PC-9 (cell line): ENCODE measurements at regions of chr12 and their contacts with region 1.

Region 1: GRCh38 chr12:100200463-100201181 is at the start of gene ACTR6:
- DNase-seq: peak; percentile 90 to 93
- H3K4me3 ChIP-seq: peak within 1 kb of the TSS; percentile 92
- H3K27ac ChIP-seq: peak within 1 kb of the TSS; percentile 37
- H3K4me1 ChIP-seq: peaks cover 26% of the 10 kb centered on the region
- H3K27me3 ChIP-seq: no peaks in the 10 kb centered on the region
- CTCF ChIP-seq: no peak
- total RNA-seq, gene ACTR6: 22.4 and 26.9 TPM in 2 replicates

Region 2: DNA sequence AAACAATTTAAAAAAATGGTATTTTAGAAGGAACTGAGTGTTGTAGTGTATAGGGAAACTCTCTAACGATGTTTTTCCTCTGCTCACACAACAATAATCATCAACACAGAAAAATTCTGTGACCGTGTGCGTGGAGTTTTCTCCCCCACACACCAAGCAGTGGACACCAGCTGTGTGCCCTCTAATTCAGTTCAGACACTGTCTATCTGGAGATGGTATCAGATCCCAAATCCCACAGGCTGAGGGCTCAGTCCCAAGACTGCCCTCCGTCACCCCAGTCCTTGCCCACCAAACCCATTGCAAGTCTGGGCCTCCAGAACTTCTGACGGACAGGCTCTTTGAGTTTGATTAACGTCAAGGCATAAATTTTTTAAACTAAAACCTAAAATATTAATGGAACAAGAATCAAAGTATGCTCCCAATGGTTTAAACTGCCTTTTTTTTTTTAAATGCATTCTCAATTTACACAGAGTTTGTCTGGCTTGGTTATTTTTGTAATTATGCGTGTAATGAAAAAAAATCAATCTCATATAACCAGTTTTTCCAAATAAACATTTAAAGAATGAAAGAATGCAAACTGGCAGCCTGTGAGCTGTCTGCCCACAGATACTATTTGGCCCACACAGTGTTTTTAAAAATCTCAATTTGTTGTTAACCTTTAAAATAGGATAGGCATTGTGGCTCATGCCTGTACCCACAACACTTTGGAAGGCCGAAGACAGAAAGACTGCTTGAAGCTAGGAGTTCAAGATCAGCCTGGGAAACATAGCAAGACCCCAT is 77.1 kb before region 1 on chr12:
- CTCF ChIA-PET with region 1: no interaction called
- POLR2A ChIA-PET with region 1: no interaction called
- intact Hi-C with region 1: no loop called
- DNase-seq: no peak
- H3K4me3 ChIP-seq: no peak overlapping the region
- H3K27ac ChIP-seq: no peak overlapping the region
- H3K4me1 ChIP-seq: peaks cover 13% of the 10 kb centered on the region
- H3K27me3 ChIP-seq: no peaks in the 10 kb centered on the region
- CTCF ChIP-seq: no peak

Region 3: DNA sequence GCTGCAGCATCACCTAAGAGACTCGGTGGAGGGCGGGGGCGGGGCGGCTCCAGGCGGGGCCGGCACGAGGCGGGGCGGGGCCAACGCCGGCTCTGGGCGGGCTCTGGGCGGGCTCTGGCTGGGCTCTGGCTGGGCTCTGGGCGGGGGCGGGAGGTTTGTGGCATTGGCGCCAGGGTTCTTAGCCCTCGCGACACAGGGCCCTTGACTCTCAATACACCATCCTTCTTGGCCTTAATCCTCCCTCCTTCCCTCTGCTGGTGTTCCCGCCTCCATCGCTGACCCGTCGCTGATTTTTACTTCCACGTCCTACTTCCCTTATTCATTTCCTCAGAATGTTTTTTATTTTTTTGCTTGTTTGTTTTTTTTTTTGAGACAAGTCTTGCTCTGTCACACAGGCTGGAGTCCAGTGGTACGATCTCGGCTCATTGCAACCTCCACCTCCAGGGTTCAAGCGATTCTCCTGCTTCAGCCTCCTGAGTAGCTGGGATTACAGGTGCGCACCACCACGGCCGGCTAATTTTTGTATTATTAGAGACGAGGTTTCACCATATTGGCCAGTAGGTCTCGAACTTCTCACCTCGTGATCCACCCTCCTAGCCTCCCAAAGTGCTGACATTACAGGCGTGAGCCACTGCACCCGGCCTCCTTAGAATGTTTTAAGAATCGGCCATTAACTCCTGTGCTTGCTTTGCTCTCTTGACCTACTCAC is 57.6 kb before region 1 on chr12 and contains the start of gene BLTP3B:
- CTCF ChIA-PET with region 1: no interaction called
- POLR2A ChIA-PET with region 1: no interaction called
- intact Hi-C with region 1: loop called (anchors 1 kb)
- DNase-seq: peak; percentile 41 to 84
- H3K4me3 ChIP-seq: peak within 1 kb of the TSS; percentile 85
- H3K27ac ChIP-seq: peak within 1 kb of the TSS; percentile 75
- H3K4me1 ChIP-seq: peaks cover 20% of the 10 kb centered on the region; the same call in 1 of the 2 replicates
- H3K27me3 ChIP-seq: no peaks in the 10 kb centered on the region
- CTCF ChIP-seq: no peak
- total RNA-seq, gene BLTP3B: 15.2 and 19.8 TPM in 2 replicates

Region 4: DNA sequence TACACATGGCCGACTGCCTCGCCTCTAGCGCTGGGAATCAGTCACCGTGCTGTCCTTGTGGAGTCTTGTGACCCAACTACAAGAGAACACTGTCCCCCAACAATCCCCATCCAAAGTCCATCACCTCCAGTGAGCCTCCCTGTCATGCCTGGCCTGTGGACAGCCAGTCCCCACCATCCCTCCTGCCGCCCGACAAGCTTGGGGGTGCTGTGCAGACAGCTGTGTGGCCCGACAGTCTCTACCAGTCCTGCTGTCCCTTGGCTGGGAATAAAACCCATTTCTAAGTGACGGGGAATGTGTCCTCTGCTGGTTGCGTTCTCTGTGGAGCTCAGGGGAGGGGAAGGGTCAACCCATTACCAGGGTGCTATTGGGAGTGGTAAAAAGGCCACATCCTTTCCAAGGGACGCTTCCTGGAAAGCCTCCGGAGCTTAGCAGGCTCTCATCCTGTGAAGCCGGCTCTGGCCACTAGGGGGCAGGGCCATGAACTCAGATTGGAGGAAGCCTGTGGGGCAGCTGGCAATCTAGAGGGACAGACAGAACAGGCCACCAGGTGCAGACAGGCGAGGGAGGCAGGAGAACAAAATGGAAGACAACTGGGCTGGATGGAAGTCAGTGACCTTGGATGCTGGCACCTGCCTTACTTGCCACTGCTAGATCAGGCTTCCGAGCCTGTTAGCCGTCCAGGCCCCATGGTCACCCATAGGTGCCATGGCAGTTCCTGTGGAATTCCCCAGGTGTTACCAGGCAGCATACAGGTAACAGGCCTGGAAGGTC is 46.0 kb before region 1 on chr12:
- CTCF ChIA-PET with region 1: no interaction called
- POLR2A ChIA-PET with region 1: interaction called, 24 read pairs
- intact Hi-C with region 1: no loop called
- DNase-seq: peak in 1 of 2 experiments; percentile 58
- H3K4me3 ChIP-seq: no peak overlapping the region
- H3K27ac ChIP-seq: no peak overlapping the region
- H3K4me1 ChIP-seq: no peaks in the 10 kb centered on the region
- H3K27me3 ChIP-seq: no peaks in the 10 kb centered on the region
- CTCF ChIP-seq: peak; percentile 95

Region 5: DNA sequence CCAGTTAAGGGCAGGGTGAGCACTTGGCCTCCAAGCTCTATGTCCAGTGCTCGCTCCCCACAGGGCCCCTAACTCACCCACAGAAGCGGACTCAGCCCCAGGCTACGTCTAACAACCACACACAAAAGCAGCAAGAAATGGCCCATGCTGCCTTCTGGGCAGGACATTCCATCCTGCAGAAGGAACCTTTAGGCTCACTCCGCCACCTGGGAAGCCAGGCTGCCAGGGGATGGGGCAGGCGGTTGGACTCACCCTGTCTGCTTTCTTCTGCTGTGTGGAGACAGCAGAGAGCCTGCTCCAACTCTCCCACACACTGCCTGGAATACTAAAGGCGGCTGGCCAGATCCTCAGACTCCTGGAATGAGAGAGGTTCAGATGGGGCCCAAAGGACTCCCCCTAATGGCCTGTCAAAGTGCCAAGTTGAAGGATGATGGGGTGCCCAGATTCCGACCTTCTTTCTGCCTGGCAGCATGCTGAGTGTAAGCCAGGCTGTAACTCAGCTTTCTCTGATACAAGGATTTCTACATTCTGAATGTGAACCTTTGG is 30.2 kb before region 1 on chr12:
- CTCF ChIA-PET with region 1: no interaction called
- POLR2A ChIA-PET with region 1: no interaction called
- intact Hi-C with region 1: no loop called
- DNase-seq: no peak
- H3K4me3 ChIP-seq: no peak overlapping the region
- H3K27ac ChIP-seq: no peak overlapping the region
- H3K4me1 ChIP-seq: no peaks in the 10 kb centered on the region
- H3K27me3 ChIP-seq: no peaks in the 10 kb centered on the region
- CTCF ChIP-seq: no peak

Region 6: GRCh38 chr12:100266835-100267618 is 66.4 kb after region 1 on chr12 and contains the starts of genes DEPDC4 and SCYL2:
- CTCF ChIA-PET with region 1: no interaction called
- POLR2A ChIA-PET with region 1: no interaction called
- intact Hi-C with region 1: loop called (anchors 1 kb)
- DNase-seq: peak; percentile 89 to 92
- H3K4me3 ChIP-seq: peak within 1 kb of the TSS; percentile 76
- H3K27ac ChIP-seq: peak within 1 kb of the TSS; percentile 87
- H3K4me1 ChIP-seq: peaks cover 21% of the 10 kb centered on the region
- H3K27me3 ChIP-seq: no peaks in the 10 kb centered on the region
- CTCF ChIP-seq: no peak
- total RNA-seq, gene DEPDC4: 1.8 and 2.9 TPM in 2 replicates
- total RNA-seq, gene SCYL2: 31.0 and 41.1 TPM in 2 replicates

Region 7: GRCh38 chr12:100295764-100296555 is 95.3 kb after region 1 on chr12:
- CTCF ChIA-PET with region 1: no interaction called
- POLR2A ChIA-PET with region 1: no interaction called
- intact Hi-C with region 1: no loop called
- DNase-seq: no peak
- H3K4me3 ChIP-seq: no peak overlapping the region
- H3K27ac ChIP-seq: no peak overlapping the region
- H3K4me1 ChIP-seq: no peaks in the 10 kb centered on the region
- H3K27me3 ChIP-seq: no peaks in the 10 kb centered on the region
- CTCF ChIP-seq: no peak

Region 8: GRCh38 chr12:100504804-100505203 is 304.2 kb after region 1 on chr12:
- CTCF ChIA-PET with region 1: no interaction called
- POLR2A ChIA-PET with region 1: no interaction called
- intact Hi-C with region 1: no loop called
- DNase-seq: no peak
- H3K4me3 ChIP-seq: no peak overlapping the region
- H3K27ac ChIP-seq: no peak overlapping the region
- H3K4me1 ChIP-seq: no peaks in the 10 kb centered on the region
- H3K27me3 ChIP-seq: peaks cover 12% of the 10 kb centered on the region; the same call in 1 of the 2 replicates
- CTCF ChIP-seq: no peak